ENCODE measurements at regions of chr14 and their contacts with region 1.

Region 1: DNA sequence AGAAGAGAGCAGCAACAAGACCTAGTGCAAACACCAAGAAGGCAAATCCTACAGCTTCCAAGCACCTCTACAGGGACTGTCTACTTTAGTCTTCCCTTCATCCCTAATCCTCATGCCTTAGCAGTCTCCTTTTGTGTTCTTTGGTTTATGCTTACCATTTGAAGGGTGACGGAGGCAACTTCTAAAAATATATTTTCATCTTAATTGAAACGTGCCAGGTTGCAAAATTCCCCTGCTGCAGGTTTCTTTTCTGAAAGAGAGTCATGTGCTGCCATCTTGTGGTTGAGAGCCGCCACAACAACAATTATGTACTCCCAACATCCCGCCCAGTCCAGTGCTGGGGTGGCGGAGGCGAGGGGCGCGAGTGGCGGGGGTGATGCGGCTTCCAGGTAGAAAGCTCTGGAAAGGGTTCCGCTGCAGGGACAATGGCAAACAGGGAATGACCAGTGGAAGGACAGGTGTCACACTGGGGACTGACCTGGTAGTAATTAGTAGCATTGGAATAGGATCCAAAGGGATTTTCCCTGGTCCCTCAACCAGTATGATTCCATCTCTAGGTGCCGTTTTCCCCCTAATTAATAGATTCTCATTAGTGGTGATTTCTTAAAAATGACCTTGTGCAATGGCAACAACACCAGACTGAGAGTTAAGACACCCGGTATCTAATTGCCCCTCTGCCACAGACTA is 80.3 kb upstream of the GNG2 start:
- DNase-seq: peak; percentile 77
- H3K4me3 ChIP-seq: no peak overlapping the region
- H3K27ac ChIP-seq: no peak overlapping the region
- H3K4me1 ChIP-seq: no peaks in the 10 kb centered on the region
- CTCF ChIP-seq: peak; percentile 96

Region 2: GRCh38 chr14:51283402-51284085 is 496.6 kb before region 1 on chr14:
- CTCF ChIA-PET with region 1: no interaction called
- POLR2A ChIA-PET with region 1: no interaction called
- intact Hi-C with region 1: loop called (anchors 2 kb)
- DNase-seq: peak; percentile 67
- H3K4me3 ChIP-seq: no peak overlapping the region
- H3K27ac ChIP-seq: no peak overlapping the region
- H3K4me1 ChIP-seq: peaks cover 6% of the 10 kb centered on the region
- CTCF ChIP-seq: peak; percentile 92

Measured in OCI-LY7 (cell line).